Naive thymus-derived CD4-positive, alpha-beta T cell (primary cell): ENCODE measurements at regions of chr2 and their contacts with region 1.

Region 1: GRCh38 chr2:163778044-163778781 is 42.4 kb upstream of the FIGN start:
- DNase-seq: no peak
- ATAC-seq: no peak
- H3K4me3 ChIP-seq: no peak overlapping the region
- H3K4me3 Mint-ChIP-seq: no peak overlapping the region
- H3K27ac ChIP-seq: no peak overlapping the region
- H3K27ac Mint-ChIP-seq: no peak overlapping the region
- H3K4me1 ChIP-seq: no peaks in the 10 kb centered on the region
- H3K4me1 Mint-ChIP-seq: no peaks in the 10 kb centered on the region
- H3K27me3 ChIP-seq: no peaks in the 10 kb centered on the region
- H3K27me3 Mint-ChIP-seq: no peaks in the 10 kb centered on the region

Region 2: GRCh38 chr2:163667064-163667887 is 110.9 kb before region 1 on chr2:
- CTCF ChIA-PET with region 1: no interaction called
- POLR2A ChIA-PET with region 1: no interaction called
- intact Hi-C with region 1: no loop called
- DNase-seq: no peak
- ATAC-seq: no peak
- H3K4me3 ChIP-seq: no peak overlapping the region
- H3K4me3 Mint-ChIP-seq: no peak overlapping the region
- H3K27ac ChIP-seq: no peak overlapping the region
- H3K27ac Mint-ChIP-seq: no peak overlapping the region
- H3K4me1 ChIP-seq: no peaks in the 10 kb centered on the region
- H3K4me1 Mint-ChIP-seq: peaks cover 0 to 1% (median 0%) of the 10 kb centered on the region in 7 donors
- H3K27me3 ChIP-seq: no peaks in the 10 kb centered on the region
- H3K27me3 Mint-ChIP-seq: no peaks in the 10 kb centered on the region

Region 3: GRCh38 chr2:163794635-163795034 is 16.4 kb after region 1 on chr2:
- CTCF ChIA-PET with region 1: no interaction called
- POLR2A ChIA-PET with region 1: no interaction called
- intact Hi-C with region 1: loop called in 1 of 2 experiments (anchors 1 kb)
- DNase-seq: no peak
- ATAC-seq: no peak
- H3K4me3 ChIP-seq: no peak overlapping the region
- H3K4me3 Mint-ChIP-seq: no peak overlapping the region
- H3K27ac ChIP-seq: no peak overlapping the region
- H3K27ac Mint-ChIP-seq: no peak overlapping the region
- H3K4me1 ChIP-seq: no peaks in the 10 kb centered on the region
- H3K4me1 Mint-ChIP-seq: no peaks in the 10 kb centered on the region
- H3K27me3 ChIP-seq: no peaks in the 10 kb centered on the region
- H3K27me3 Mint-ChIP-seq: no peaks in the 10 kb centered on the region